Left cardiac atrium (tissue), 4 donors: ENCODE measurements at regions of chr3 and their contacts with region 1.

Region 1: GRCh38 chr3:47164007-47164881 is at the start of gene SETD2:
- DNase-seq: peak; percentile 97
- ATAC-seq: peak; percentile 97 to 98
- total RNA-seq, gene SETD2: 24.8 to 31.3 TPM

Region 2: DNA sequence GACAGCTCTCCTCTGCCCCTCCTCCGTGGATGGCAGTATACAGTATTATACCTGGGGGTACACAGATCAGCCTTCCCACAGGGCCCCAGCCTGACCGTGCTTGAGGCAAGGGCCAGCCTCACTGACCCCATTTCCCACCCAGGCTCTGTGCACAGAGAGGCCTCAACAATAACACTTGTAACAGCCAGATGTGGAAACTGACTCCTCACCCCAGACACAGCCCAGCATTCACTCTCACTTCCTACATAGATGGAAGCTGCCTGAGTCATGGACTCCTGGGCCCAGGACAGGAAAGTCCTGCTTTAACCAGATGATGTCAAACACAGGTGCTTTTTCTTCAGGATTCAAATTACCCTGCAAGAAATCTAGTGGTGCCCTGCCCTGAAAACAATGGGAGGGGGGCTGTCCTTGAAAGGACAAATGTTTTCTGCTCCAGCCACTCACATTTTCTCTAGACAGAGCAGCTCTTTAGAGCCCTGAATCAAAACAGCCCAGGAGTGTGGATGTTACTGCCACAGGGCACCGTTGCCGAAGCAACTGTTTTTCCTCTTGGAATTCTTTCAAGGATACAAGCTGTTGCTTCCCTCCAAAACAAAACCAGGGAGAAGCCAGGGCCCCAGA is 204.1 kb before region 1 on chr3:
- intact Hi-C with region 1: no loop called
- DNase-seq: peak; percentile 22
- ATAC-seq: peak; percentile 36 to 78

Region 3: DNA sequence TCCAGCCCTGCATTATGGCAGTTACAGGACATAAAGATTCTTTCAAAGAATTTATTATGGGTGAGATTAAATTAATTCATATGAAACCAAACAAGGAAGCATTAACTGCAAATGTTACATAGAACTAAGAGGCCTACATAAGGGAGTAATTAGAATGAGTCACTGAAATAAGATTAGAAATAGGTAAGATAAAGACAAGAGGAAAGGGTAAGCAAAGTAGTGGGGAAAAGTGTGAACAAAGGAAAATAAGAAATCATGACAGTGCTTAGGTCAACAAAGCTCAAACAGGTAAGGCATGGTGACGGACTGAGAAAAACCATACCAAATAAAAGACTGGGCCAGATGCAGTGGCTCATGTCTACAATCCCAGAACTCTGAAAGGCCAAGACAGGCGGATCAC is 74.6 kb before region 1 on chr3:
- intact Hi-C with region 1: no loop called
- DNase-seq: no peak
- ATAC-seq: no peak

Region 4: DNA sequence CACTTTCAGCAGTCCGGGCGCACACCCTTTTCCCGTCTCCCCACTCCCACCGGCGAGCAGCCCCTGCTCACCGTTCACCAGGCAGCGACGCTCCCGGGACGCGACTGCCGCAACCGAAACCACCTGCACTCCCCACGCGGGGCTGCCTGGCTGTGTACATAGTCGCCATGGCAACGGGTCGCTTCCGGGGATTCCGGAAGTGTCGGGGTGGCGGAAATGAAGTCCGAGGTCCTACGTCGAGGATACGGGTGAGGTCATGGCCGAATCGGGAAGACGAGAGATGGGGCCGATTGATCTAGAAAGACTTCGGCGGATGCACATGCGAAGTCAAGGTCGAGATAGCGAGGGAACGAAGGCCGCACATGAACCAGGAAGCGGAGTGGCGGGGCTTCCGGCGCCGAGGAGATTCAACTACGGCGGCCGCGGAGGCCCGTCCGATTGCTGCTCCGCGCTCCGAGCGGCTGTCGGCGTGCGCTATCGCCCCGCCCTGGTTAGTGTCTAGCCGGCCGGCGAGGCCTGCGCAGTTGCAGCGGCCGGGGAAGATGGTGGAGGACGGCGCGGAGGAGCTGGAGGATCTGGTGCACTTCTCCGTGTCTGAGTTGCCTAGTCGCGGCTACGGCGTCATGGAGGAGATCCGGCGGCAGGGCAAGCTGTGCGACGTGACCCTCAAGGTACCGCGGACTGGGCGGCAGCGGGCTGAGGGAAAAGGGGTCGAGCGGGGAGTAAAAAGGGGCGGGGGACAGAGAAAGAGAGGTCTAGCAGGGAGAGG is 118.4 kb after region 1 on chr3 and contains the starts of genes KIF9 and KLHL18:
- intact Hi-C with region 1: loop called in 1 of 2 experiments (anchors 10 kb)
- DNase-seq: peak; percentile 96
- ATAC-seq: peak; percentile 97
- total RNA-seq, gene KIF9: 6.1 to 8.0 TPM
- total RNA-seq, gene KLHL18: 32.9 to 39.5 TPM